Activated CD8-positive, alpha-beta T cell treated with anti-CD3 and anti-CD28 coated beads for 36 hours (primary cell): ENCODE measurements at regions of chr2 and their contacts with region 1.

Region 1: GRCh38 chr2:238370823-238371372 is 50.6 kb downstream of the TRAF3IP1 start:
- DNase-seq: peak; percentile 76
- ATAC-seq: peak; percentile 95
- H3K4me3 Mint-ChIP-seq: no peak overlapping the region
- H3K27ac Mint-ChIP-seq: no peak overlapping the region
- H3K4me1 Mint-ChIP-seq: peaks cover 3% of the 10 kb centered on the region
- H3K27me3 Mint-ChIP-seq: no peaks in the 10 kb centered on the region
- CTCF ChIP-seq: peak; percentile 87

Region 2: DNA sequence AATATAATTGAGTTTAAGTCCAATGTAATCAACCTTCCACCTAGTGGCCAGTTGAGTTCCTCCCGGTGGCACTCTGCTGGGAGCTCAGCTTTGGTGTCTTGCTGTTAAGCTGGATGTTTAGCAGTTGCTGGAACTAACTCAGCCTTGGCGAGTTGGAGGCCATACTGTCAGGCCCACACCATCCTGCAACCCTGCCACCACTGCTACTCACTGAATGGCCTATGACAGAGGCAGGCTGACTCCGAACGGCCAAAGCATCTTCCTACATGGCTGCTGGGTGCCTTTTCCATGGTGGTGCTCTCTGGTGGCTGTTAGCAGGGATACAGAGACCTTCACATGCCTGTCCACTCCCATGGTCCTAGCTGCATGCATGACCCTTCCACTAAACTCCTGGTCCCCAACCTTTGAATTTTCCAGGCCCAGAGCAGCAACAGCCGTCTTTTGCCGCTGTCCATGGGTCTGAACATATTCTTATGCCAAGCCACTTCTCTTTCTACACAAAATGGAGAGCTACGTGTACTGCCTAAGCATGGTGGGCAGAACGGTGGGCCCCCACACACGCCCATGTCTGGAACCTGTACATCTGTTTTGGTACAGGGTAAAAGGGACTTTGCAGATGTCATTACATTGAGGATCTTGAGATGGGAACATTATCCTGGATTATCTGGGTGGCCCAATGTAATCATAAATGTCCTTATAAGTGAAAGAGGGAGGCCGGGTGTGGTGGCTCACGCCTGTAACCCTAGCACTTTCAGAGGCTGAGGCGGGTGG is 65.6 kb before region 1 on chr2:
- CTCF ChIA-PET with region 1: no interaction called
- POLR2A ChIA-PET with region 1: no interaction called
- intact Hi-C with region 1: no loop called
- DNase-seq: no peak
- ATAC-seq: no peak
- H3K4me3 Mint-ChIP-seq: no peak overlapping the region
- H3K27ac Mint-ChIP-seq: no peak overlapping the region
- H3K4me1 Mint-ChIP-seq: no peaks in the 10 kb centered on the region
- H3K27me3 Mint-ChIP-seq: peaks cover 3% of the 10 kb centered on the region
- CTCF ChIP-seq: no peak

Region 3: DNA sequence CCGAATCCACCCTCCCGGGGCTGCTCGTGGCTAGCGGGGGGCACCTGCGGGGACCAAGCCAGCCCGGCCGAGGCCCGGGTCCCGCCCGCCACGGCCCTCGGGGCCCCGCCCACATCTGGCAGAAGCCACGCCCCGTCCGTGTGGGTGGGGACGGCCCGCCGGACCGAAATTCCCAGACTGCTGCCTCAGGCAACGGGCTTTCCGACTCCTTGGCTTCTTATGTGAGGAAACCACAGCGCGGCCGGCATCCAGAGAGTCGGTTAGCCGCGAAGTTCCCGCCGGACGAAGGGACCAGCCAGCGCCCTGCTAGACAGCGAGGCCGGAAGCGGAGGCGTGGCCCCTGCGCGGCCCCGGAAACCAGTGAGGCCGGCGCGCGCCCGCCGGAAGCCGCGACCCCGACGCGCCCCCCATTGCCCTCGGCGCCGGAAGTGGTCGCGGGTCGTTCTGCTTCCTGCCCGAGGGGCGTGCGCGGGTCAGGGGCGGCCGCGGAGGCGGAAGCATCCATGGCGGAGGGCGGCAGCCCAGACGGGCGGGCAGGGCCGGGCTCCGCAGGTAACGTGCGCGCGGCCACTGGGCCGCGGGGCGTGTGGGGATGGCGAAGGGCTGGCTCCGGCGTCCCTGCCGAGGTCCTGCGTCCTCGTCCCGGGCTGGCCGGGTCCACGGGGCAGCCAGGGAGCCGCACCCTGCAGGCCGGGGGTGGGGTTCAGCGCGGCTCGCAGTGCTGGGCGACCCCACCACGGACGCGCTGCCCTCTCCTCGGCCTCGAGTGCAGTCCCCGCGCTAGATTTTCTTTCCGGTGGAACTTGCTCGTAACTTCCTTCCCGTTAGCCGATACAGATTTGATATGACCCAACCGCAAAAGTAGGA is 55.9 kb after region 1 on chr2 and contains the start of gene ASB1:
- CTCF ChIA-PET with region 1: interaction called, 14 read pairs
- POLR2A ChIA-PET with region 1: no interaction called
- intact Hi-C with region 1: loop called (anchors 10 kb)
- DNase-seq: peak; percentile 87
- ATAC-seq: peak; percentile 85
- H3K4me3 Mint-ChIP-seq: peak within 1 kb of the TSS; percentile 89
- H3K27ac Mint-ChIP-seq: peak within 1 kb of the TSS; percentile 93
- H3K4me1 Mint-ChIP-seq: peaks cover 39% of the 10 kb centered on the region
- H3K27me3 Mint-ChIP-seq: no peaks in the 10 kb centered on the region
- CTCF ChIP-seq: no peak
- total RNA-seq, gene ASB1: 39.8 to 48.1 TPM

Region 4: DNA sequence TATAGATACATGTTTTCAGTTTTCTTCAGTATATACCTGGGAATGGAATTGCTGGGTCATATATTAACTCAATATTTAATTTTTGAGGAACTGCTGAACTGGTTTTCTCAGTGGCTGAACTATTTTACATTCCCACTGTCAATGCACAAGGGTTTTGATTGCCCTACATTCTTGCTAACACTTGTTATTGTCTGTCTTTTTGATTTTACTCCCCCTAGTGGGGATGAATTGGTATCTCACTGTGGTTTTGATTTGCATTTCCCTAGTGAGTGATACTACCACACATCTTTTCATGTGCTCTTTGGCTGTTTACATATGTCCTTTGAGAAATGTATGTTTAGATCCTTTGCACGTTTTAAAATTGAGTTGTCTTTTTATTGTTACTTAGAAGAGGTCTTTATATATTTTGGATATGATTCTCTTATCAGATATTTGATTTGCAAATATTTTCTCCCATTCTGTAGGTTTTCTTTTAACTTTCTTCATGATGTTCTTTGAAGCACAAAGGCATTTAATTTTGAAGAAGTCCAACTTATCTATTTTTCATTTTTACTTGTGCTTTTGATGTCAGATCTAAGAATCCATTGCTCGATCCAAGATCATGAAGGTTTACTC is 92.0 kb after region 1 on chr2:
- CTCF ChIA-PET with region 1: interaction called, 37 read pairs
- POLR2A ChIA-PET with region 1: no interaction called
- intact Hi-C with region 1: loop called (anchors 5 kb)
- DNase-seq: no peak
- ATAC-seq: peak; percentile 76
- H3K4me3 Mint-ChIP-seq: no peak overlapping the region
- H3K27ac Mint-ChIP-seq: no peak overlapping the region
- H3K4me1 Mint-ChIP-seq: no peaks in the 10 kb centered on the region
- H3K27me3 Mint-ChIP-seq: no peaks in the 10 kb centered on the region
- CTCF ChIP-seq: peak; percentile 85

Region 5: DNA sequence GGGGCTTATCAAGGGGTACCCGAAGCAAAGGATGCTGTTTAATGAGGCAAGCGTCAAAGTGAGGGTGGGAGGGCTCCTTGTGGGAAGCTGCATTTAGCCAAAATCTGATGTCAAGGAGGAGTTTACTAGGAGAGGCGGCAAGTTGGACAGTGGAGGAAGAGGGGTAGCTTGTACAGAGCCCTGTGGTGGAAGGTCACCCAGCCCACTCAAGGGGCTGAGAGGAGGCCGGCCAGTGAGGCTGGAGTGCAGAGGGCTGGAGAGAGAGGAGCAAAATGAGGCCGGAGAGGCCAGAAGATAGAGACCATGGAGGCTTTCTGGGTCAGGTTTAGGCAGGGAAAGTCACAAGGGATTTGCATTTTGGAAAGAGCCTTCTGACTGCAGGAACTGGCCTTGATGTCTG is 105.4 kb after region 1 on chr2:
- CTCF ChIA-PET with region 1: interaction called, 12 read pairs
- POLR2A ChIA-PET with region 1: no interaction called
- intact Hi-C with region 1: no loop called
- DNase-seq: no peak
- ATAC-seq: no peak
- H3K4me3 Mint-ChIP-seq: no peak overlapping the region
- H3K27ac Mint-ChIP-seq: no peak overlapping the region
- H3K4me1 Mint-ChIP-seq: no peaks in the 10 kb centered on the region
- H3K27me3 Mint-ChIP-seq: no peaks in the 10 kb centered on the region
- CTCF ChIP-seq: no peak

Region 6: DNA sequence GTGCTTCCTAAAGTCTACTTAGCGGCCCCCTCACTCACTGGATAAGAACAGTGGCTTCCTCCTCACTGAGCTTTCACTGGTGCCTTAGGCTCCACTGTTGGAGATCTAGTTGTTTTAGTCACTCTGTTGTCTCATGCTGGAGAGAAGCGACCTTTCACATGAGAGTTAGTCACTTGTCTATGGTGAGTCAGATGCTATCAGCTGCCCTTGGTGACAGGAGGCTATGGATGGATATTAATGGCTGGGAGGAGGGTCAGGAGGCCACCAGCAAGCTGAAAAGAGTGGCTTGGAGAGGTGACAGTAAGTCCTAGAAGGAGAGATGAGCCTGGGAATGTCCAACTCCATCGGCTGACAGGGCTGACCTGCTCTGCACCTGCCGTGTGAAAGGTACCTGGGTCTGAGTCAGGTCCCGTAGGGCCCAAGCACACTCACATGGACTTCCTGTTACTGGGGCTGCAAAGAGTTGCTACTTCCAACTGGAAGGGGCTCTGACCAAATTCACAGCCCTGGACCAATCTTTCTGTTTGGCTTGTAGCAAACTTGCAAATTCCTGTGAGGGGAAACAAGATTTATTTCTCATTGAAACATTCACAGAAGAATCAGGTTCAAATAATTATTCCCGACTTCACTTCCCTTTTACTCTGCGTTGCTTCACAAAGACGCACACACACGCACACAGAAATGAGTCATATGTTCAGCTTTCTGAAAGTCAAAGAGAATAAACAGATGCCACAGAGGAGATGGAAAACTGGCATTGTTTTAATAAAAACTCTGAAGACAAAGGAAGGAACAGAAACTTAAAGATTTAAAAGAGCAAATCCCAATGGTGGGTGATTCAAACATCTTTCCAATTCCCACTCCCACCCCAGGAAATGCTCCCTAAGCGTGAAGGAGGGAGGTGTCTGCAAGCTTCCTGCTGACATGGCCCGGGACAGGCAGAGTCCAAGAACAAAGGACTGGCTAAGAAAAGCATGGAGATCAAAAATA is 273.5 kb after region 1 on chr2:
- CTCF ChIA-PET with region 1: no interaction called
- POLR2A ChIA-PET with region 1: no interaction called
- intact Hi-C with region 1: no loop called
- DNase-seq: peak; percentile 49
- ATAC-seq: peak; percentile 91
- H3K4me3 Mint-ChIP-seq: no peak overlapping the region
- H3K27ac Mint-ChIP-seq: peak overlapping the region; percentile 29
- H3K4me1 Mint-ChIP-seq: peaks cover 12% of the 10 kb centered on the region
- H3K27me3 Mint-ChIP-seq: peaks cover 2% of the 10 kb centered on the region
- CTCF ChIP-seq: no peak

Region 7: DNA sequence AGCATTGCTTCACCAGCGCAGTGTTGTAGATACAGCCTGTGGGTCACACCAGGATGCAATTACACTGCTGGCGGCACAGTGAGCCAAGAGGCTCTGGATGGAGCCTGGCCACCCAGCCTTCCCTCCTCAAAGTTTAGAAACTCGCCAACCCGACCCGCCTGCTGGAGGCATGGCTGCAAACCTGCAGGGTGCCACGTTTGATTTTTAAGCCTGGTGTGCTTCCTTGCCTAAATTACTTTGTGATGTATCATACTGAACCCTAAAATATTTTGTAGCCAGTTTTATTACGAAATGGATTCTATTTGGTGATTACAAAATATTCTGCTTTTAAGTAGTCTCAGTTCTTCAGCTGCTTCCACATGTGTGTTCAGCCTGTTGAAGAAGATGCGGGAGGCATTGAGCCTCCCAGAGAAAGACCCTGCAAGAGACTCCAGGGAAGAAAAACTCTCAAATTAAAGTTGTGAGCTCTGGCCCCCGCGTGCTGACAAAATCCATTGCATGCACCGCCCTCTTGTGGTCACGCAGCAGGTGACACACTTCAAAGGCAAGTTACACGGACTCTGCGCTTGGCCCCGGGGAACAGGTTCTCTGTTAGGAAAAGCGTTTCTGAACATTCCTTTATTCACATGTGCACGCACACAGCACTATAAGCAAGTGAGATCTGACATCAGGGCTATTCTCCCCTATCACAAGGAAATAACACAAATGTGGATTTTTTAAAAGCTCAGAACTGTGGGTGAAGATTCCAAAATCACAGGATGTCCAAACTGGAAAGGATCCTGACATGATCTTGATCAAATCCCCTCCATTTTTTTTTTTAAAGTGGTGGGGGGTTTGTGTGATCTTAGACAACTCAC is 414.0 kb after region 1 on chr2:
- CTCF ChIA-PET with region 1: interaction called, 13 read pairs
- POLR2A ChIA-PET with region 1: no interaction called
- intact Hi-C with region 1: loop called (anchors 10 kb)
- DNase-seq: peak; percentile 71
- ATAC-seq: peak; percentile 69
- H3K4me3 Mint-ChIP-seq: no peak overlapping the region
- H3K27ac Mint-ChIP-seq: no peak overlapping the region
- H3K4me1 Mint-ChIP-seq: no peaks in the 10 kb centered on the region
- H3K27me3 Mint-ChIP-seq: peaks cover 3% of the 10 kb centered on the region
- CTCF ChIP-seq: peak; percentile 85